Panc1 (cell line): ENCODE measurements at regions of chr14 and their contacts with region 1.

Region 1: GRCh38 chr14:91536327-91536726 is 26.2 kb upstream of the PPP4R3A start:
- DNase-seq: no peak
- ATAC-seq: no peak
- H3K4me3 ChIP-seq: no peak overlapping the region
- H3K27ac ChIP-seq: no peak overlapping the region
- H3K4me1 ChIP-seq: no peaks in the 10 kb centered on the region
- H3K27me3 ChIP-seq: no peaks in the 10 kb centered on the region; the same call in 1 of the 2 replicates
- CTCF ChIP-seq: no peak

Region 2: GRCh38 chr14:92014040-92014439 is 477.7 kb after region 1 on chr14:
- CTCF ChIA-PET with region 1: no interaction called
- POLR2A ChIA-PET with region 1: interaction called, 12 read pairs
- in situ Hi-C with region 1: no loop called
- intact Hi-C with region 1: no loop called
- DNase-seq: no peak
- ATAC-seq: no peak
- H3K4me3 ChIP-seq: no peak overlapping the region
- H3K27ac ChIP-seq: no peak overlapping the region
- H3K4me1 ChIP-seq: no peaks in the 10 kb centered on the region
- H3K27me3 ChIP-seq: no peaks in the 10 kb centered on the region
- CTCF ChIP-seq: no peak